Right cardiac atrium (tissue), 5 donors: ENCODE measurements at regions of chr15 and their contacts with region 1.

Region 1: DNA sequence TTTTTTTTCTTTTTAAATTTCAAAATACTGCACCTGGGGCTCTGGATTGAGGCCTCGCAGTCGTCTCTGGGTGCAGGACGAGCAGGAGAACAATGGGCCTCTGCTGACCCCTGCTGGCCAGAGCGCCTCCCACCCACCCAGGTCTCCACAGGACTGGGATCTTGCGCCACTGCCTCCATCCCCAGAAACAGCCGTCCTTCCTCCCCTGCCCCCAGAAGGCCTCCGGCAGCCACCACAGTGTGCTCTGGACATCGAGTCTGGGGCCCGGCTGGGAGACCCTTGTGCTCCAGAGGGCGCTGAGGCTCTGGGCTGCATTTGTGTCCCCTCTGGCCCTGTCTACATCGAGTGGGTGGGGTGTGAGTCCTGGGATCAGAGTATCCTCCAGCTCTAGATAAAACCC is 6.6 kb upstream of the ACSBG1 start:
- DNase-seq: peak; percentile 84 to 95 (median 95)
- ATAC-seq: peak; percentile 91 to 92
- H3K4me3 ChIP-seq: no peak overlapping the region
- H3K27ac ChIP-seq: no peak overlapping the region
- H3K4me1 ChIP-seq: no peaks in the 10 kb centered on the region
- H3K27me3 ChIP-seq: no peaks in the 10 kb centered on the region

Region 2: GRCh38 chr15:77966540-77967290 is 274.3 kb before region 1 on chr15:
- intact Hi-C with region 1: loop called in 1 of 4 experiments (anchors 10 kb)
- DNase-seq: no peak
- ATAC-seq: peak; percentile 77 to 84
- H3K4me3 ChIP-seq: no peak overlapping the region
- H3K27ac ChIP-seq: no peak overlapping the region
- H3K4me1 ChIP-seq: no peaks in the 10 kb centered on the region
- H3K27me3 ChIP-seq: no peaks in the 10 kb centered on the region

Region 3: GRCh38 chr15:78034495-78035191 is 206.4 kb before region 1 on chr15:
- intact Hi-C with region 1: no loop called
- DNase-seq: no peak
- ATAC-seq: peak; percentile 20 to 59
- H3K4me3 ChIP-seq: no peak overlapping the region
- H3K27ac ChIP-seq: peak overlapping the region; percentile 63
- H3K4me1 ChIP-seq: peaks cover 12% of the 10 kb centered on the region
- H3K27me3 ChIP-seq: no peaks in the 10 kb centered on the region

Region 4: DNA sequence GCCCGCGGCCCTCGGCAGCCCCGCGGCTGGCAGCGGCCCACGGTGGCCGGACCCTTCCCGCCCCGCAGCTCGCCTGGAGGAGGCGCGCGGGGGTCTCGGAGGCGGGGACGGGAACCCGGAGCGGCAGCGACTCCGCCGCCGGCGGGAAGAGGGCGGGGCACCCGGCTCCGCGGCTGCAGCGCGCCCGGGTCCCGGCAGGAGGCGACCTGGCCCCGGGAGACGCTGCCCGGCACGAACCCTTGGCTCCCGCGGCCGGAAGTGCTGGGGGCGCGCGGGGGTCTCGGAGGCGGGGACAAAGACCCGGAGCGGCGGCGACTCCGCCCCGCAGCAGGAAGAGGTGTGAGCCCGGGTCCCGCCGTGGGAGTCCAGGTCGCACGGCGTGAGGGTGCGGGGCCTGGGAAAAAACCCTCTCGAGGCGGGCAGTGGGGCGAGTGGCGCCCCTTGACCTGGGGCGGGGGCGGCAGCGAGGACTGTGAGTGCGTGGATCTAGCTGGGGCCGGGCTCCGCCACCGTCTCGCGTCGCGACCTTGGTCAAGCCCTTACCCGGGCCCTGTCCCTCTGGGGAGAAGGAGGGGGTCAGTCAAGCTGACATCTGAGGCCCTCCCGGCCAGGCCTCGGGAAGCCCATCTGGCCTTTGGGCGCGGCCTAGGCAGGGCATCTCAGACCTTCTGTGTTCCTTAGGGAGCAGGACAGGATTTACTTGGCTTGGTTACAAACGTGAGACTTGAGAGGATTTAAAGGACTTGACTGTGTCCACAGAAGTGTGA is 109.5 kb before region 1 on chr15 and contains the start of gene CIB2:
- intact Hi-C with region 1: loop called in 2 of 4 experiments (anchors 5 kb)
- DNase-seq: peak; percentile 76 to 92 (median 92)
- ATAC-seq: peak; percentile 90 to 91
- H3K4me3 ChIP-seq: peak within 1 kb of the TSS; percentile 64
- H3K27ac ChIP-seq: peak within 1 kb of the TSS; percentile 44
- H3K4me1 ChIP-seq: no peaks in the 10 kb centered on the region
- H3K27me3 ChIP-seq: no peaks in the 10 kb centered on the region
- total RNA-seq, gene CIB2: 59.0 to 76.3 (median 64.5) TPM

Region 5: DNA sequence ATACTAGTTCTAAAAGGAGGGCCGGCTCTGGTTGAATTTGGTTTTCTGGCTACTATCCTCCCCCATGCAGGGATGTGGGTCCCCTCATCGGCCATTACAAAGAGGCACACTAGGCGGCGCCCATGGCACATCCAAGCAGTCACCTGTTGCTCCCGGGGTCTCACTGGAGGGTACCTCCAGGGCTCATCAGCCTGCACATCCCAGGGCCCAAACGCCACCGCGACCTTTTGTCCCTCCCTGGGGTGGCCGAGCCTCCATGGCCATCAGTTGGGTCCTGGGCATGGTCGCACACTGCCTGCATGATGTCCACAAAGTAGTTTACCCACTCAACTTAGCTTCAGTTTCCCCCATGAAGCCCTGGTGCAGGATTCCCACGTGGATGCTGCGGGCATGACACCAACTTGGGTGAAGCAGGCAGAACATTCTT is 63.5 kb before region 1 on chr15:
- intact Hi-C with region 1: loop called (anchors 2 to 10 kb)
- DNase-seq: peak in 2 of 3 donors; percentile 74 to 79
- ATAC-seq: peak; percentile 50 to 52
- H3K4me3 ChIP-seq: no peak overlapping the region
- H3K27ac ChIP-seq: no peak overlapping the region
- H3K4me1 ChIP-seq: no peaks in the 10 kb centered on the region
- H3K27me3 ChIP-seq: no peaks in the 10 kb centered on the region